MCF 10A (cell line): ENCODE measurements at regions of chr4 and their contacts with region 1.

Region 1: DNA sequence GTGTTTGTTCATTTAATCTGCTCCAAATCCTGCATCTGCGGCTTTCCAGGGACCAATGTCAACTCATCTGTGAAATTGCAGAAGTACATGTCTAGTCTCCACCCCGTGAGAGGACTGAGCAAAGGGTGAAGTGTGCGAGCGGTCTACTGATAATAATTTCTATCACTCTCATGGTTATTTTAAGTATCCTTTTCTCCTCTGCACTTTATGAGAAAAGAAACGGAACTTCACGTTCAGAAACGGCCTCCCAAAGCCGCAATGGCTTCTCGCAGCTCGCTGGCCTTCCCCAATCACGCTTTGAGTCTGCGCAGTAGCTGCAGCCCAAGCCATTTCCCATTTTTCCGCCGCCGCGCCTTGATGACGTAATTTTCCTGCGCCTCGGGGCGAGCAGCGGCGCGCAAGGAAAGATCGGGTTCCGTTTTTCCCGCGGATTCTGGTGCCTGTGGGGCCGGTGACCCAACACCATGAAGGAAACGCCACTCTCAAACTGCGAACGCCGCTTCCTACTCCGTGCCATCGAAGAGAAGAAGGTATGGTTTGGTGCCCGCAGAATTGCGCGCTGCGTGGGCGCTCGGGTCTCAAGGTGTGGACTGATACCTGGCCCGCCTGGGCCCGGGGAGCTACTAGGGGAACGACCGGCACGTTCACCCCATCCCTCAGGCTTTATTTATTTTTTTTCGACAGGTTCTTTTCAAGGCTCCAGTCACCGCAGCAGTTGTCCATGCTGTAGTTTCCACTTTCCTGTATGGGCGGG is at the start of gene EXOSC9:
- DNase-seq: peak; percentile 93
- H3K4me3 Mint-ChIP-seq: peak within 1 kb of the TSS; percentile 86
- H3K27ac Mint-ChIP-seq: peak within 1 kb of the TSS; percentile 90
- H3K4me1 Mint-ChIP-seq: peaks cover 17% of the 10 kb centered on the region
- H3K27me3 Mint-ChIP-seq: no peaks in the 10 kb centered on the region
- CTCF ChIP-seq: no peak
- total RNA-seq, gene EXOSC9: 29.2 and 30.9 TPM in 2 replicates

Region 2: GRCh38 chr4:121817006-121817405 is 15.9 kb after region 1 on chr4:
- CTCF ChIA-PET with region 1: no interaction called
- POLR2A ChIA-PET with region 1: interaction called, 31 read pairs
- intact Hi-C with region 1: no loop called
- DNase-seq: no peak
- H3K4me3 Mint-ChIP-seq: no peak overlapping the region
- H3K27ac Mint-ChIP-seq: no peak overlapping the region
- H3K4me1 Mint-ChIP-seq: peaks cover 19% of the 10 kb centered on the region
- H3K27me3 Mint-ChIP-seq: no peaks in the 10 kb centered on the region
- CTCF ChIP-seq: no peak

Region 3: GRCh38 chr4:121823505-121824170 is 22.5 kb after region 1 on chr4 and contains the start of gene CCNA2:
- CTCF ChIA-PET with region 1: interaction called, 3 read pairs
- POLR2A ChIA-PET with region 1: interaction called, 31 read pairs
- intact Hi-C with region 1: no loop called
- DNase-seq: peak; percentile 99
- H3K4me3 Mint-ChIP-seq: peak within 1 kb of the TSS; percentile 82
- H3K27ac Mint-ChIP-seq: peak within 1 kb of the TSS; percentile 91
- H3K4me1 Mint-ChIP-seq: peaks cover 9% of the 10 kb centered on the region
- H3K27me3 Mint-ChIP-seq: no peaks in the 10 kb centered on the region
- CTCF ChIP-seq: no peak
- total RNA-seq, gene CCNA2: 12.1 and 22.0 TPM in 2 replicates